Sciatic nerve (tissue), 2 donors: ENCODE measurements at regions of chr4 and their contacts with region 1.

Region 1: DNA sequence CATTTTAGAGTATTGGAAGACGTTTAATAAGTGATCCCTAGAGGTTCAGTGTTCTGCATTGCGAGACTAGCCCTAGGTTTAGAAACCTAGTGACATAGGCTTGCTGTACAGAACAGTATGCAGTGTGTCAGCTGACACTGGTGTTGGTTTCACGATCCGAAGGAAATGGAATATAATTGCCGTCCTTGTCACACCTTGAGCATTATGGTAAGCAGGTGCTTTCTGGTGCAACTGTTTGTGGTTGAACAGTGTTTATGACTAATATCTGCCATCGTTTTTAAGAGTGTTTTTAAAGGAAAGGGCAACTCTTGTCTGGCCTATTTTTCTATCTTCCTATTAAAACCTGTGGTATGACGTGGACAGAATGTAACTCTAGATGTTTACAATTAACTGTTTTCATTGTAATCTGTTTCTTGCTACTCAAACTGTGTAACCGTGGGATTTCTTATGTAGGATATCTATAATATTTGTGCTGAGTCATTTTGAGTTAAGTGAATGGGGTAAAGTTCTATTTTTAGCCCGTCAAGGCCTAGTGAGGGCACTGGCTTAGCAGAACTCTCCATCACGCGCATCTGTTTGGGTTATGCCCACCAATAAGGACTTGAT is 53.8 kb upstream of the TBC1D14 start:
- DNase-seq: no peak
- ATAC-seq: peak; percentile 53

Region 2: DNA sequence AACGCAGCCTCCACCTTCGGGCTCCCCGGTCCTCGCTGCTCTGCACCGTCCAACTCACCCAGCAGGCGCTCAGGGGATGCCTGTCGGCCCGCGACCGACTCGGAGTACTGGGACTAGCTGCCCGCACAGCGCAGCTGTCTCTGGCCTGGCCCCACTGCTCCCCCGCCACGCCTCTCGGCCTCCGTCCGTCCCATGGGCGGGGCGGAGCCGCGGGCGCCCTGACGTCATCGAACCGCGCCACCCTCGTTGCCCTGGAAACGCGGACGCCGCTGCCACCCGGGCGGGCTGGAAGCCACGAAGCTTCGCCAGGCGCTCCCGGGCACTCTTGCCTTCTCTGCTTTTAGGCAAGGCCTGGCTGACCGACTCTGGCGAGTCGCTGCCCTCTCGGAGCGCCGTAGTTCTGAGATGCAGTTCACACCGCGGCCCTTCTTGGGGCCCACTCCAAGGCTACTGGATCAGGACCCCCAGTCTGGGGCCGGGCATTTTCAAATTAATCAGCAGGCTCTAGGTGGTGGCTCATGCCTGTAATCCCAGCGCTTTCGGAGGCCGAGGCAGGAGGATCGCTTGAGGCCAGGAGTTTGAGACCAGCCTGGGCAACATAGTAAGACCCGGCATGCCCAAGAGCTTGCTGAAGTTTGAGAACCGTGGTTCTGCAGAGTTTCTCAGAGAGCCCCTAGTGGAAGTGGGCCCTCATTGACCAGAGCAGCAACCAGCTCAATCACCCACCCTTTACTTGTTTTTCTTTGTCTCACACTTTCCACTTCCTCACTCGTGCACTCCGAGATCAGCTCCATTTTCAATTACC is 1572.7 kb after region 1 on chr4:
- intact Hi-C with region 1: loop called (anchors 5 kb)
- DNase-seq: peak; percentile 95
- ATAC-seq: peak; percentile 99

Region 3: GRCh38 chr4:8580321-8581093 is 1724.7 kb after region 1 on chr4 and contains the start of gene GPR78:
- intact Hi-C with region 1: no loop called
- DNase-seq: peak; percentile 69
- ATAC-seq: peak; percentile 77
- total RNA-seq, gene GPR78: 0.58 TPM